ENCODE measurements at regions of chr15 and their contacts with region 1.

Region 1: DNA sequence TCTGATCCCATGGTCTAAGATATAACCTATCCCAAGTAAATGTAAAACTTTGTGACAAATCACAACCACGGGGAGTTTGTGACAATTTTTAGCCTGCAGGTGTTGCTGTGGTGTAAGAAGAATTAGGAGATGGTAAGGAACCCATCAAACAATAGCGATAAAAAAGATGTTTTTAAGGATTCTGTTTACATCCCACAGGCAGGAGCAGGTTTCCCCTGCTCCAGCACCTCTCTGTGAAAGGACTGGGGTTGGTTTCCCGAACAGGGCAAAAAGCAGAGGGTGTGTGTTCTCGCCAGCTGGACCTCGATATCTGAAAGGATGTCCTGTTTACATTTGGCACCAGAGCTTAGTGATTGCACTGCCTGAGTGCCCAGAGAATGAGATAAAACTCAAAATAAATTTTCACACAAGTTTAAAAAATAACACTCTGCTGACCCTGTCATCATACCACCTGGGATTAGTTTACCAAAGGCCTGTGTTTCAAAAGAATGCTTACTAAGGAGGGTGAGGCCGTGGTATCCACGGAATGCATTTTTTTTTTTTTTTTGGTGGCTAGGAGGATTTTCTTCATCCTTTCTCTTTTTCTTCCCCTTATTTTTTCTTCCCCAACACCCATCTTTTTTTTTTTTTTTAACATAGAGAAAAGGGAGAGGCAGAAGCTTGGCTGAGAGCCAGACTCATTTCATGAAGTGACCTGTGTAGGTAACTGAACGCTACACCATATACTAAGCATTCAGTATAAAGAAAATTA is 151.8 kb upstream of the DPH6 start:
- DNase-seq: peak; percentile 58
- ATAC-seq: peak; percentile 38
- H3K4me3 ChIP-seq: no peak overlapping the region
- H3K27ac ChIP-seq: no peak overlapping the region
- H3K4me1 ChIP-seq: peaks cover 22% of the 10 kb centered on the region
- H3K27me3 ChIP-seq: no peaks in the 10 kb centered on the region
- CTCF ChIP-seq: peak; percentile 62

Region 2: DNA sequence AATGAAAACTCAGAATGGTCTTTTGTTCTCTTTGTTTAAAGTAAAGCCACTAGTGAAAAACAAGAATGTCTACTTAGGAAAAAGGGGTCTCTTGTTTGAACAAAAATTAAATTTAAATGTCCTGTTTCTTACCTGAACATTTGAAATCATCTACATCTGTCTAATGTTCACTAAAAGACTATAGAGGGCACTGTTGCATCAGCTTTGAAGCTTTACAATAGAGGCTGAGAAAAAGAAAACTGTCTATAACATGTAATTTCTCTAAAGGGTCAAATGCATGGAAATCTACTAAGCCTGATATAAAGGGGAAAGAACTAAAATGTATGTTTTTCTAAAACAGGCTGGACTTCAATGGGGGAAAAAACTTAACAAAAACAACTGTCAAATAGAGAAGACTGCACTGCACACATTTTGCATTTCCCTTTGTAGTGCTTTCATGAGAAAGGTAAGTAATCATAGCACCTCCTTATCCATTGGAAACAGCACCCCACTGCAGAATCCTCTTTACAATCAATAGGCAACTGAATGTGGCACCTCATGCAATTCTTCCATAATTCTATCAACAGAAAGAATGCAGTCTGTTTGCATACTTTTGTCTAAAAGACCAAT is 178.1 kb before region 1 on chr15:
- CTCF ChIA-PET with region 1: no interaction called
- POLR2A ChIA-PET with region 1: no interaction called
- intact Hi-C with region 1: loop called (anchors 5 kb)
- DNase-seq: peak; percentile 69
- ATAC-seq: peak; percentile 81
- H3K4me3 ChIP-seq: no peak overlapping the region
- H3K27ac ChIP-seq: no peak overlapping the region
- H3K4me1 ChIP-seq: no peaks in the 10 kb centered on the region
- H3K27me3 ChIP-seq: no peaks in the 10 kb centered on the region
- CTCF ChIP-seq: peak; percentile 89

Region 3: DNA sequence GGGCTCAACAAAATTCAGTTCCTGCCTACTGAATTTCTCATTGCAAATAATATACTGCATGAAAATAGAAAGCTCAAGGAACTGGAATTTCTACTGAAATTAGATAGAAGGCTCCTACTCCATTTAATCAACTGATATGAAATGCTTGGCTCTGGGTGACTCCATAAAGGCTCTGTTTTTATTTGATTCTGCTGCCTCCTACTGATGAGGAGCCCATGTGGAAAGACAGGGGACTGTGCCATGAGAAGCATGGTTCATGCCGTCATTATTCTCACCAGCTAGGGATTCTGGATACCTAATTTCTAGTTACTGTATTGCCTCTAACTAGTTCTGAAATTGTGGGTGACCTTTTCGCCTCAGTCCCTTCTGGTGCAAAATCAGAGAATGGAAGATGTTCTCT is 214.5 kb after region 1 on chr15:
- CTCF ChIA-PET with region 1: no interaction called
- POLR2A ChIA-PET with region 1: no interaction called
- intact Hi-C with region 1: loop called (anchors 1 kb)
- DNase-seq: peak; percentile 50
- ATAC-seq: peak; percentile 84
- H3K4me3 ChIP-seq: no peak overlapping the region
- H3K27ac ChIP-seq: no peak overlapping the region
- H3K4me1 ChIP-seq: no peaks in the 10 kb centered on the region
- H3K27me3 ChIP-seq: no peaks in the 10 kb centered on the region
- CTCF ChIP-seq: peak; percentile 57

Measured in PC-3 (cell line).